Activated T-helper 1 cell treated with anti-CD3 and anti-CD28 coated beads, Interleukin-12 subunit alpha, Interleukin-12 subunit beta, Interleukin-2, Interleukin-4 antibody, amounts not matched to agents 30 ng/mL and 10 ng/mL and 1 ng/mL, durations not matched to agents 14 hours and 24 hours and 36 hours (primary cell): ENCODE measurements at regions of chr5 and their contacts with region 1.

Region 1: GRCh38 chr5:80711938-80712337 is 57.2 kb upstream of the DHFR start:
- DNase-seq: no peak
- H3K4me3 Mint-ChIP-seq: no peak overlapping the region
- H3K27ac Mint-ChIP-seq: peak overlapping the region; percentile 47
- H3K4me1 Mint-ChIP-seq: peaks cover 34% of the 10 kb centered on the region
- H3K27me3 Mint-ChIP-seq: no peaks in the 10 kb centered on the region

Region 2: DNA sequence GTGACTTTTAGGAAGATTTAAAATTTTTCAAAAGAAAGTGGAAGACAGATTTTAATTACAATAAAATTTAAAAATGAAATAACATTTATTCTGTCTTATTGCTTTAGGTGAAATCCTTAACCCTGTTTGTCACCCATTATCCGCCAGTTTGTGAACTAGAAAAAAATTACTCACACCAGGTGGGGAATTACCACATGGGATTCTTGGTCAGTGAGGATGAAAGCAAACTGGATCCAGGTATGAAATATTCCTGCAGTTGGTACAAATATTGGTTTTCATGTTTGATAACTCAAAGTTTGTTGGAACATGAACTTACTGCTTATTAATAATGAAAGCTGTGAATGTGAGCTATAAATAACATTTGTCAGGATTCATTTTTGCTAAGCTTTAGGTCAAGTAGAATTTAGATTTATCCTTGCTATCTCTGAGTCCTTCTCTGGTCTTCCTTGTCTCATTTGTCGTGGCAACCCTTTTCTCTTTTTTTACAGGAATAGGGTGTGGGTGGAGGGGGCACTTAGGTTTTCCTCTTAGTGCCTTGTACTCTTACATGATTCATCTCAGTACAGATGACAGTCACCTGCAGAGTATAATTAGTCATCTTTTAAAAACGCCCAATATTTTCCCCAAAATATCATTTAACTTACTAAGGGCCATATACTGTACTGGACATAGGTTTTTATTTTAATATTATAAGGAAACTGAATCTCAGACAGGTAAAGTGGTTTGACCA is 152.9 kb after region 1 on chr5:
- intact Hi-C with region 1: loop called (anchors 5 kb)
- DNase-seq: no peak
- H3K4me3 Mint-ChIP-seq: peak overlapping the region; percentile 3
- H3K27ac Mint-ChIP-seq: peak overlapping the region; percentile 38
- H3K4me1 Mint-ChIP-seq: peaks cover 65% of the 10 kb centered on the region
- H3K27me3 Mint-ChIP-seq: no peaks in the 10 kb centered on the region

Region 3: DNA sequence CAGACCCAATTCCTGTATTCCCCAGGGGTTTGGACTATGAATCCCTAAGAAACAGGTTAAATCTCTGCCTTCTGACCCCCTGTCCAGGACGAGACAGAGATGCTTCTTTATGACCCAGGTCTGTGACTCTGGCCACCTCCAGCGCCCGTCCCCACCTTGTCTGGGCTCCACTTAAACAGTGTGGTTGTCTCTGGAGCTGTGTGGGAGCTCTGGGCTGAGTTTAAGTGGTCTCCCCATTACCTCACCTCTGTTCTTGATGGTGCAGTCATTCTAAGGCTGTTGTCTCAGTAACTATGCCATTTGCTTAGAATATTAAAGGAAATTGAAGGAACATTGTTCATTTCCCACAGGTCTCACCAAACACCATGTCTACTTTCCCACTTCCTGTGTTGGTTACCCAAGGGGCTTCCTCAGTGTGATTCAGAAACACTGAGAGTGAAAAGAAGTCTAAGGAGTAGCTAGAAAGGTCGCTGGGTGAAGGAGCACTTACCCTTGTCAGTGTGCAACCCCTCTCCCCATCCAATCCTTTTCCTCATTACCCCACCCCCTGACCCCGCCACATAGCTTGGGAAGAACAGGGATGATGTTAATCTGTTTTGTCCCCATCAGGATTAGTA is 393.4 kb after region 1 on chr5:
- intact Hi-C with region 1: loop called (anchors 5 kb)
- DNase-seq: no peak
- H3K4me3 Mint-ChIP-seq: peak overlapping the region; percentile 15
- H3K27ac Mint-ChIP-seq: no peak overlapping the region
- H3K4me1 Mint-ChIP-seq: peaks cover 32% of the 10 kb centered on the region
- H3K27me3 Mint-ChIP-seq: no peaks in the 10 kb centered on the region